Activated CD8-positive, alpha-beta T cell treated with anti-CD3 and anti-CD28 coated beads for 36 hours (primary cell): ENCODE measurements at regions of chr20 and their contacts with region 1.

Region 1: GRCh38 chr20:47501483-47502270 is at the start of gene NCOA3:
- DNase-seq: peak; percentile 98
- ATAC-seq: peak; percentile 92
- H3K4me3 Mint-ChIP-seq: peak within 1 kb of the TSS; percentile 94
- H3K27ac Mint-ChIP-seq: peak within 1 kb of the TSS; percentile 87
- H3K4me1 Mint-ChIP-seq: peaks cover 42% of the 10 kb centered on the region
- H3K27me3 Mint-ChIP-seq: peaks cover 1% of the 10 kb centered on the region
- CTCF ChIP-seq: no peak
- total RNA-seq, gene NCOA3: 66.2 to 73.7 TPM

Region 2: GRCh38 chr20:47411161-47411560 is 90.5 kb before region 1 on chr20:
- CTCF ChIA-PET with region 1: interaction called, 3 read pairs
- POLR2A ChIA-PET with region 1: no interaction called
- intact Hi-C with region 1: loop called (anchors 10 kb)
- DNase-seq: no peak
- ATAC-seq: no peak
- H3K4me3 Mint-ChIP-seq: no peak overlapping the region
- H3K27ac Mint-ChIP-seq: no peak overlapping the region
- H3K4me1 Mint-ChIP-seq: peaks cover 28% of the 10 kb centered on the region
- H3K27me3 Mint-ChIP-seq: no peaks in the 10 kb centered on the region
- CTCF ChIP-seq: no peak

Region 3: GRCh38 chr20:47453142-47453782 is 48.4 kb before region 1 on chr20:
- CTCF ChIA-PET with region 1: interaction called, 3 read pairs
- POLR2A ChIA-PET with region 1: interaction called, 6 read pairs
- intact Hi-C with region 1: loop called (anchors 5 kb)
- DNase-seq: peak; percentile 75
- ATAC-seq: peak; percentile 82
- H3K4me3 Mint-ChIP-seq: peak overlapping the region; percentile 34
- H3K27ac Mint-ChIP-seq: peak overlapping the region; percentile 70
- H3K4me1 Mint-ChIP-seq: peaks cover 51% of the 10 kb centered on the region
- H3K27me3 Mint-ChIP-seq: no peaks in the 10 kb centered on the region
- CTCF ChIP-seq: no peak

Region 4: DNA sequence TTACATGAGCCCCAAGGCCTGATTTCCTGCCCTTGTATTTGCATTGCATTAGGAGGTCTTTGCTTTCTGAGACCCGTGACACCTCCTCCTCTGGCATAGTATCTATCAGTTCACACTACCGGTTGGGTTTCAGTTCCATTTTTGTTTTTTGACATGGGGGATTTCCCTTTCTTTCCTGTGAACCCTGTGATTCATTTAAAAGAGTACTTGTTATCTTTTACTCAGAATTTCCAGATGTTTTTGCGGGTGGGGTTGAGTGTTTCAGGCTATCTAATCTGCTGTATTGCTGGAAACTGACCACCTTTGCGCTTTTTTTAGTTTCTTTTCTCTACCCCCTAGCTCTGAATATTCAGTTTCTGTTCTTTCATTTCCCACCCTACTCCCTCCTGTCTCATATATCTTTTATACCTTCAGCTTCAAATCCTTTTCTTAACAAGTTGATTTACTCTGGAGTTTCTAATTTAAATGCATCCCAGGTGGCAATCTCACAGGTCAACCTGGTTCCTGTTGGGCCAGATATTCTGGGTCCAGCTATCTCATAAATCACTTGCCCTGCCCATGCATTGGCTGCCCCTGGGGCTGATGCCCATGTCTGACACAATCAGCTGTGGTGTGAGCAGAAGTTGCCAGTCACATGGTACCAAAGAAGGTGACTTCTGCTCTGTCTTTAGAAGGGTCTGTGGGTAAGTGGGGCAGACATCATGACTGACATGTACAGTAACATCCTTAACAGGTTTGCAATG is 14.3 kb before region 1 on chr20:
- CTCF ChIA-PET with region 1: interaction called, 27 read pairs
- POLR2A ChIA-PET with region 1: interaction called, 53 read pairs
- intact Hi-C with region 1: loop called (anchors 2 kb)
- DNase-seq: peak; percentile 84
- ATAC-seq: peak; percentile 87
- H3K4me3 Mint-ChIP-seq: peak overlapping the region; percentile 54
- H3K27ac Mint-ChIP-seq: peak overlapping the region; percentile 100
- H3K4me1 Mint-ChIP-seq: peaks cover 61% of the 10 kb centered on the region
- H3K27me3 Mint-ChIP-seq: no peaks in the 10 kb centered on the region
- CTCF ChIP-seq: no peak

Region 5: DNA sequence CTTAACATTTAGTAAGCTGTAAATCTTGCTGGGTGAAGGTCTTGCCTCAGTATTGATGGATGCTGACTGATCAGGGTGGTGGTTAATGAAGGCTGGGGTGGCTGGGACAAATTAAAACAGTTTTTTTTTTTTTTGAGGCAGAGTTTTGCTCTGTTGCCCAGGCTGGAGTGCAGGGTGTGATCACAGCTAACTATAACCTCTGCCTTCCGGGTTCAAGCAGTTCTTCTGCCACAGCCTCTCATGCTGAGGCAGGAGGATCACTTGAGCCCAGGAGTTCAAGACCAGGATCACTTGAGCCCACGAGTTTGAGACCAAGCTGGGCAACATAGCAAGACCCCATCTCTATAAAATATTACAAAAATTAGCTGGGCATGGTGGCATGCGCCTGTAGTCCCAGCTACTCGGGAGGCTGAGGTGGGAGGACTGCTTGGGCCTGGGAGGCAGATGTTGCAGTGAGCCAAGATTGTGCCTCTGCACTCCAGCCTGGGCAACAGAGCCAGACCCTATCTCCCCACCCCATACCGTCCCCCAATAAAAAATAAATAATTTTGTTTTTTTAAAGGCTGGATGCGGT is 67.2 kb after region 1 on chr20:
- CTCF ChIA-PET with region 1: no interaction called
- POLR2A ChIA-PET with region 1: no interaction called
- intact Hi-C with region 1: no loop called
- DNase-seq: no peak
- ATAC-seq: no peak
- H3K4me3 Mint-ChIP-seq: no peak overlapping the region
- H3K27ac Mint-ChIP-seq: peak overlapping the region; percentile 24
- H3K4me1 Mint-ChIP-seq: peaks cover 69% of the 10 kb centered on the region
- H3K27me3 Mint-ChIP-seq: no peaks in the 10 kb centered on the region
- CTCF ChIP-seq: no peak

Region 6: DNA sequence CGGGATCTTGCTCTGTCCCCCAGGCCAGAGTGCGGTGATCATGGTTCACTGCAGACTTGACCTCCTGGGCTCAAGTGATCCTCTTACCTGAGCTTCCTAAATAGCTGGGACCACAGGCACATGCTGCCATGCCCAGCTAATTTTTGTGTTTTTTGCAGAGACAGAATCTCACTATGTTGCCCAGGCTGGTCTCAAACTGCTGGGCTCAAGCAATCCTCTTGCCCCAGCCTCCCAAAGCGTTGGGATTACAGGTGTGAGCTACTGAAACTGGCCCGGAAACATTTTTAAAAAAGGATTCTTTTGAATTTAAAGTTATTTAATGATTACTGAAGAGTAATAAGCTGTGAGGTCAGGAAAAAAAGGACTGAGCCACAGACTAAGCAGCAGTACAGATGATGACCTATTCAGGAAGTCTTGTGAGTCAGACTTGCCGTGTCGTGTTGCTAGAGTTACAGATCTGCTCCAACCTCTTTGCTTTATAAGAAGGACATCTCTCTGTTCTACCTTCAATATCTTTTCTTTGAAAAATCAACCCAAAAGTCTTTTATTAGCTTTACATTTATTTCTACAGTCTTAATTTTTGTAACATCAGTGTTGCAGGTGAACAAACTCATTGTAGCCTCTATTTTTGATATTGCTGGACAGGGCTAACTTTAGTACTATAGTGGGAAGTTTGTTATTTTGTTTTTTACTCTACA is 108.7 kb after region 1 on chr20:
- CTCF ChIA-PET with region 1: interaction called, 7 read pairs
- POLR2A ChIA-PET with region 1: interaction called, 24 read pairs
- intact Hi-C with region 1: loop called (anchors 2 kb)
- DNase-seq: peak; percentile 99
- ATAC-seq: peak; percentile 88
- H3K4me3 Mint-ChIP-seq: peak overlapping the region; percentile 68
- H3K27ac Mint-ChIP-seq: peak overlapping the region; percentile 96
- H3K4me1 Mint-ChIP-seq: peaks cover 86% of the 10 kb centered on the region
- H3K27me3 Mint-ChIP-seq: no peaks in the 10 kb centered on the region
- CTCF ChIP-seq: no peak

Region 7: GRCh38 chr20:47620808-47621805 is 119.4 kb after region 1 on chr20:
- CTCF ChIA-PET with region 1: interaction called, 28 read pairs
- POLR2A ChIA-PET with region 1: interaction called, 5 read pairs
- intact Hi-C with region 1: no loop called
- DNase-seq: peak; percentile 21
- ATAC-seq: peak; percentile 58
- H3K4me3 Mint-ChIP-seq: no peak overlapping the region
- H3K27ac Mint-ChIP-seq: peak overlapping the region; percentile 71
- H3K4me1 Mint-ChIP-seq: peaks cover 37% of the 10 kb centered on the region
- H3K27me3 Mint-ChIP-seq: no peaks in the 10 kb centered on the region
- CTCF ChIP-seq: peak; percentile 95